ENCODE measurements at regions of chr1 and their contacts with region 1.

Region 1: DNA sequence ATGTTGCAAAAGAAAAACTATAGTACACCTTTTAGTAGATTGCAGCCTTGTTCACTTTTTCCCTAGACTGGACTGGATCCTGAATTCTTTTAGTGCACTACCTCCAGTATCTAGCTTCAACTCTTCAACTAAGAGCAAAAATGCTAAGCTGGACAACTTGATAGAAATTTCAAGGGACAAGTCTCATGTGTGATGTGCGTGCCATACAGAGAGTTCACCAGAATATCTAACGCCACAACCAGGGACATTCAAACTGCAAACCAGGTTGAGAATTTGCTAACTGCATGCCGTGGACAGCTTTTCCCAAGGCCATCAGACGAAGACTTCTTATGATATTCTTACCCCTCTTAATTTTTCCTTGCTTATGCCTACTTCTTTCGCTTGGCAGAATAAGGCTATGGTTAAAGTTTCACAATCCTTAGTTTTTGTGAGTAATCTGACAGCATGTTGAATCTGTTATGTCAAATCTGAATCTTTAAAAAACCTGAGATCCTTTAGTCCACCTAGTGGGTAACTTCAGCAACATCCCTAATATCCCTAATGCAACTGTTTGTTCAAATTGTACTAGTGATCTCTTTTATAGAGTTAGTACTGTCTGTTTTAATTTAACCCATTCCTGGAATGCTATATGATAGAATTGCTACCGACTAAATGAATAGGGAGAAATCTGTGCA is 66.4 kb downstream of the DDAH1 start:
- DNase-seq: peak; percentile 72
- H3K4me3 ChIP-seq: no peak overlapping the region
- H3K27ac ChIP-seq: peak overlapping the region; percentile 48
- H3K4me1 ChIP-seq: peaks cover 31% of the 10 kb centered on the region
- H3K27me3 ChIP-seq: no peaks in the 10 kb centered on the region
- CTCF ChIP-seq: peak; percentile 65

Region 2: GRCh38 chr1:84214115-84214956 is 1184.2 kb before region 1 on chr1:
- CTCF ChIA-PET with region 1: no interaction called
- POLR2A ChIA-PET with region 1: no interaction called
- intact Hi-C with region 1: no loop called
- DNase-seq: no peak
- H3K4me3 ChIP-seq: no peak overlapping the region
- H3K27ac ChIP-seq: no peak overlapping the region
- H3K4me1 ChIP-seq: no peaks in the 10 kb centered on the region
- H3K27me3 ChIP-seq: no peaks in the 10 kb centered on the region
- CTCF ChIP-seq: no peak

Region 3: GRCh38 chr1:85344256-85344694 is 54.3 kb before region 1 on chr1:
- CTCF ChIA-PET with region 1: no interaction called
- POLR2A ChIA-PET with region 1: no interaction called
- intact Hi-C with region 1: loop called (anchors 1 kb)
- DNase-seq: peak; percentile 54
- H3K4me3 ChIP-seq: no peak overlapping the region
- H3K27ac ChIP-seq: peak overlapping the region; percentile 68
- H3K4me1 ChIP-seq: peaks cover 53% of the 10 kb centered on the region
- H3K27me3 ChIP-seq: no peaks in the 10 kb centered on the region
- CTCF ChIP-seq: peak; percentile 63

Measured in A673 (cell line).